Activated naive CD4-positive, alpha-beta T cell treated with anti-CD3 and anti-CD28 coated beads for 36 hours (primary cell): ENCODE measurements at regions of chr12 and their contacts with region 1.

Region 1: GRCh38 chr12:24728366-24728765 is 220.5 kb downstream of the BCAT1 start:
- DNase-seq: no peak
- H3K4me3 Mint-ChIP-seq: no peak overlapping the region
- H3K27ac Mint-ChIP-seq: no peak overlapping the region
- H3K4me1 Mint-ChIP-seq: peaks cover 31% of the 10 kb centered on the region
- H3K27me3 Mint-ChIP-seq: peaks cover 4% of the 10 kb centered on the region

Region 2: GRCh38 chr12:23204933-23205778 is 1523.2 kb before region 1 on chr12:
- CTCF ChIA-PET with region 1: no interaction called
- intact Hi-C with region 1: loop called (anchors 2 kb)
- DNase-seq: peak; percentile 13
- H3K4me3 Mint-ChIP-seq: no peak overlapping the region
- H3K27ac Mint-ChIP-seq: no peak overlapping the region
- H3K4me1 Mint-ChIP-seq: no peaks in the 10 kb centered on the region
- H3K27me3 Mint-ChIP-seq: peaks cover 5% of the 10 kb centered on the region

Region 3: DNA sequence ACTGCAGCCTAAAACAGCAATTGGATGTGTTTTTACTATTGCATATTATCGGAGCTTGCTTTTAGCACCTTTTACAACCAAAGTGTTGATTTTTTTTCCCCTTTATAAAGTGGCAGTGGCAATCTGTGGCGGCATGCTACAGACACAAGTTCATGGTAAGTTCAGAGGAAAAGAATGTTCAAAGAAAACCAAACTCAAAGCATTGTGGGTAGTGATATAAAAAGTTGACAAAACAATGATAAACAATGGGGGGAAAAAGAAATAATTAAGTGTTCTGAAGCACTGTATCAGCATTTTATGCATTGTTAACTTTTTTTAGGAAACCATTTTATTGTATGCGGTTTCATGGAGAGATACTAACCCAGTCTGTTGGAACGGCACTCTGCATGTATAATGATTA is 286.9 kb before region 1 on chr12:
- CTCF ChIA-PET with region 1: no interaction called
- intact Hi-C with region 1: loop called (anchors 5 kb)
- DNase-seq: no peak
- H3K4me3 Mint-ChIP-seq: no peak overlapping the region
- H3K27ac Mint-ChIP-seq: no peak overlapping the region
- H3K4me1 Mint-ChIP-seq: no peaks in the 10 kb centered on the region
- H3K27me3 Mint-ChIP-seq: no peaks in the 10 kb centered on the region

Region 4: GRCh38 chr12:24561882-24562760 is 166.2 kb before region 1 on chr12:
- CTCF ChIA-PET with region 1: no interaction called
- intact Hi-C with region 1: loop called (anchors 5 kb)
- DNase-seq: peak; percentile 24
- H3K4me3 Mint-ChIP-seq: peak overlapping the region; percentile 78
- H3K27ac Mint-ChIP-seq: peak overlapping the region; percentile 46
- H3K4me1 Mint-ChIP-seq: peaks cover 13% of the 10 kb centered on the region
- H3K27me3 Mint-ChIP-seq: peaks cover 64% of the 10 kb centered on the region

Region 5: DNA sequence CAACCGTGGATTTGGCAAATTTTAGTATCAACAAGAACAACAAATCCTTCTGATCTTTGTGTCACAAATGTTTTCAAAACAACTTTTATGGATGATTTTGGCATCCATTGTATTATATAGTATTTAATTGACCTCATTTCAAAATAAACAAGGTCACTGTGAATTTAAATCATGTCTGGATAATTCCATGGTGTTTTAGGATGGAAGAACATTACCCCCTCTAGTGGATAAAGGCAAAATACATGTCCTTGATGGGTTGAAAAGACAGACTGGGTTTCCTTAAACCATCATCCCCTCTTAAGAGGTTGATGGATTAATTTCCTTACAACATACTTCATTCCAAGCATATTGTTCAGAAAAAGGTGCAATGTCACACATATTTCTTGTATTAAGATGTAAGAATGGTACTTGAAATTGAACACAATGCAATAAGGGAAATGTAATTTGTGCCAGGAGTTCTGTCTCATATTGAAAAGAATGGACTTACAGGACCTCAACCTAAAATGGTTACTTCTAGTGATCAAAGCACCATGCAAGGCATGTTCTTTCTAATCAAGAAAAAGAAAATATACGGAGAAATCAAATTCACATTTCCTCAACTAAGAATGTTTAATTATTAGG is 131.5 kb before region 1 on chr12:
- CTCF ChIA-PET with region 1: no interaction called
- intact Hi-C with region 1: loop called (anchors 1 kb)
- DNase-seq: no peak
- H3K4me3 Mint-ChIP-seq: no peak overlapping the region
- H3K27ac Mint-ChIP-seq: no peak overlapping the region
- H3K4me1 Mint-ChIP-seq: peaks cover 2% of the 10 kb centered on the region
- H3K27me3 Mint-ChIP-seq: peaks cover 7% of the 10 kb centered on the region

Region 6: GRCh38 chr12:24742378-24742777 is 14.0 kb after region 1 on chr12:
- CTCF ChIA-PET with region 1: no interaction called
- intact Hi-C with region 1: loop called (anchors 1 kb)
- DNase-seq: peak; percentile 59
- H3K4me3 Mint-ChIP-seq: no peak overlapping the region
- H3K27ac Mint-ChIP-seq: no peak overlapping the region
- H3K4me1 Mint-ChIP-seq: peaks cover 8% of the 10 kb centered on the region
- H3K27me3 Mint-ChIP-seq: no peaks in the 10 kb centered on the region

Region 7: GRCh38 chr12:24754690-24755638 is 26.6 kb after region 1 on chr12:
- CTCF ChIA-PET with region 1: no interaction called
- intact Hi-C with region 1: loop called (anchors 1 kb)
- DNase-seq: peak; percentile 25
- H3K4me3 Mint-ChIP-seq: no peak overlapping the region
- H3K27ac Mint-ChIP-seq: peak overlapping the region; percentile 74
- H3K4me1 Mint-ChIP-seq: peaks cover 12% of the 10 kb centered on the region
- H3K27me3 Mint-ChIP-seq: peaks cover 19% of the 10 kb centered on the region